ENCODE measurements at regions of chr22 and their contacts with region 1.

Region 1: DNA sequence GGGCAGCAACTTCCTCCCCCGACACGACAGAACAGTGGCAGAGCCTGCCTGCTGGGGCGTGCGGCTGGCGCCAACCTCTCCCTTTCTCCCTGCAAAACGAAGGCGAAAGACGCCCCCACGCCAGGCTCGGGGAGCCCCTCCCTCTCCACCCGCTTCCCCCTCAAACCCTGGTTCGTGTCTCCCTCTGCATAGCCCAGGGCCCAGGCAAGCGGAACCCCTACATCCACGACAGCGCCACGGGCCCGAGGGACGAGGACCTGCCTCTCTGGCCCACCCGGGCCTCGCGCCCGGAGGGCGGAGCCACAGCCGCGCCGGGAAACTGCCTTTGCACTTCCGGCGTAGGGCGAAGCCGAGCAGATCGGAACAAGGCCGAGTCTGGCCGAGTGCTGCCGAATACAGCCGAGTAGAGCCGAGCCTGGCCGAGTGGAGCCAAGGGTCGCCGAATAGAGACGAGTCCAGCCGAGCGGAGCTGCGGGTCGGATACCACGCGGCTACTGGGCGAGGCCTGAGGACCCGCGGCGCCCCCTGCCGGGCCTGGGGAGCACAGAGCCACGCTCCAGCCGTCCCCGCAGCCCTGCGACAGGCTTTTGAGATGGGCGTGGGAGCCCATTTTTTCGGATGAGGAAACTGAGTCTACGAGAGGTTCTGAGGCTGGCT is 11.2 kb upstream of the C1QTNF6 start:
- DNase-seq: peak; percentile 100
- ATAC-seq: peak; percentile 98
- H3K4me3 Mint-ChIP-seq: peak overlapping the region; percentile 89
- H3K27ac Mint-ChIP-seq: peak overlapping the region; percentile 95
- H3K4me1 Mint-ChIP-seq: peaks cover 38% of the 10 kb centered on the region
- H3K27me3 Mint-ChIP-seq: no peaks in the 10 kb centered on the region

Region 2: DNA sequence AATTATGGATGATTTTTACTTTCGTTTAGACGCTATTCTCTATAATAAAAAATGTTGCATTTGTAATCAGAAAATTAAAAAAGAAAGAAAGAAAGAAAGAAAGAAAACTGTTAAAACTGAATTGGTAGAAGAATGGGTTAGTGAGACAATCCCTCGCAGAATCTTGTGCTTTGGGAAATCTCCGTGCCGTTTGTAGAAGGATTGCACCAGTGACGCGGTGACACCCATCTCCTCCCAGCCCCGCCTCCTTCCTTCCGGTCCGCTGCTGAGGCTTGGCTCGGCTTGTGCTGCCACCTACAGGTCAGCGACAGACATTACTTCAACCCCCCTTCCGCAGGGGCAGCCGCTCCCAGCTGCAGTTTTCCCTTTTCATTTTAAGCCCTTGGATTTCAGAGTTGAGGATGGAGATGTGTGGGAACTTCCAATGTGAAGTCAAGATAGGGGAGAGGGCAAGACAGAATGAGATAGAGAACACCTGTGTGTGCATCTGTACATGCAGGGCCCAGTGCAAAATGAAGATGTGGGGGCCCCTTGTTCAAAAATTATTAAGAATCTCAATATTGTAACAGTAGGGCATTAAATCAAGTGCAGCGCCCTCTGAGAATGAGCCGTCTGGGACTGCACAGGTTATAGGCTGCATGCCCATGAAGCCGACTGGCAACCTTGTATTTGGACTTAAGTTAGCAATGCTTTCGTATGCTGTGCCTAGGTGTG is 221.1 kb before region 1 on chr22:
- CTCF ChIA-PET with region 1: interaction called, 5 read pairs
- POLR2A ChIA-PET with region 1: no interaction called
- intact Hi-C with region 1: loop called in 1 of 2 experiments (anchors 2 kb)
- DNase-seq: peak; percentile 95
- ATAC-seq: peak; percentile 86
- H3K4me3 Mint-ChIP-seq: peak overlapping the region; percentile 76
- H3K27ac Mint-ChIP-seq: peak overlapping the region; percentile 77
- H3K4me1 Mint-ChIP-seq: peaks cover 8% of the 10 kb centered on the region
- H3K27me3 Mint-ChIP-seq: no peaks in the 10 kb centered on the region

Region 3: GRCh38 chr22:37043828-37044538 is 155.2 kb before region 1 on chr22:
- CTCF ChIA-PET with region 1: interaction called, 13 read pairs
- POLR2A ChIA-PET with region 1: no interaction called
- intact Hi-C with region 1: loop called in 1 of 2 experiments (anchors 1 kb)
- DNase-seq: peak; percentile 76
- ATAC-seq: peak; percentile 63
- H3K4me3 Mint-ChIP-seq: no peak overlapping the region
- H3K27ac Mint-ChIP-seq: no peak overlapping the region
- H3K4me1 Mint-ChIP-seq: peaks cover 23% of the 10 kb centered on the region
- H3K27me3 Mint-ChIP-seq: no peaks in the 10 kb centered on the region

Region 4: GRCh38 chr22:37121887-37122591 is 77.2 kb before region 1 on chr22:
- CTCF ChIA-PET with region 1: interaction called, 7 read pairs
- POLR2A ChIA-PET with region 1: interaction called, 3 read pairs
- intact Hi-C with region 1: loop called (anchors 1 kb)
- DNase-seq: peak; percentile 96
- ATAC-seq: peak; percentile 94
- H3K4me3 Mint-ChIP-seq: peak overlapping the region; percentile 79
- H3K27ac Mint-ChIP-seq: peak overlapping the region; percentile 98
- H3K4me1 Mint-ChIP-seq: peaks cover 76% of the 10 kb centered on the region
- H3K27me3 Mint-ChIP-seq: no peaks in the 10 kb centered on the region

Region 5: DNA sequence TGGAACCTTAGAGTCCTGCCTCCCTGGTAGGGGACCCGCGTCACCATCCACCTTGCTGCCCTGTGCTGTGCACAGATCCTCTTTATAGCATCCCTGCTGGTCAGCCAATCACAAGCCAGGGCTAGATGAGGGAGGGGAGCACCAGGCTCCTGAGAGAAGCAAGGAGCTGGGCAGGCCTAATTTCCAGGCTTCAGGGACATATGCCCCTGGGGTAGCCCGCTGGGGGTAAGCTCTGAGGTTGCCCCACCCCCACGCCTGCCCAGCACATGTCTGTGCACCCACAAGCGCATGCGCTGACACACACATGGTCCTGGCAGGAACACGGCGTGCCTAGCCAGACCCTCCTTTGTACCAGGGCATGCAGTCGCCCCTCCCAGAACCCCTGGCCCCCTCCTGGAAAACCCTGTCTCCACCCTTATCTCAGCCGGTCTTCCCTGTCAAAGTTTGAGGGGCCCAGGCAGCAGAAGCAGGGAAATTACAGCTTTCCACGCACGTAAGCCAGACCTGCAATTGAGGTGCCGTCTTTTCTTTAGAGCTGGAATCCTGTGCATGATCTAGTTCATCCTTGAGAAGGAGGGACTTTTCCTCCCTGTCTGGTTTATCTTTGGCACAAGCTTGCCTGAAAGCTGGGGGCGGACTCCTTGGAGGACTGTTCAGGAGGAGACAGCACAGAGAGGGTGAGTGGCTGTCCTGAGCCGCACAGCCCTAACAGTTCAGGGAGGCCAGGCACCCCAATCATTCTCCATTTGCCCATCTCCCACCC is 11.0 kb after region 1 on chr22:
- CTCF ChIA-PET with region 1: interaction called, 37 read pairs
- POLR2A ChIA-PET with region 1: no interaction called
- intact Hi-C with region 1: no loop called
- DNase-seq: peak; percentile 16
- ATAC-seq: no peak
- H3K4me3 Mint-ChIP-seq: no peak overlapping the region
- H3K27ac Mint-ChIP-seq: no peak overlapping the region
- H3K4me1 Mint-ChIP-seq: peaks cover 41% of the 10 kb centered on the region
- H3K27me3 Mint-ChIP-seq: no peaks in the 10 kb centered on the region

Region 6: DNA sequence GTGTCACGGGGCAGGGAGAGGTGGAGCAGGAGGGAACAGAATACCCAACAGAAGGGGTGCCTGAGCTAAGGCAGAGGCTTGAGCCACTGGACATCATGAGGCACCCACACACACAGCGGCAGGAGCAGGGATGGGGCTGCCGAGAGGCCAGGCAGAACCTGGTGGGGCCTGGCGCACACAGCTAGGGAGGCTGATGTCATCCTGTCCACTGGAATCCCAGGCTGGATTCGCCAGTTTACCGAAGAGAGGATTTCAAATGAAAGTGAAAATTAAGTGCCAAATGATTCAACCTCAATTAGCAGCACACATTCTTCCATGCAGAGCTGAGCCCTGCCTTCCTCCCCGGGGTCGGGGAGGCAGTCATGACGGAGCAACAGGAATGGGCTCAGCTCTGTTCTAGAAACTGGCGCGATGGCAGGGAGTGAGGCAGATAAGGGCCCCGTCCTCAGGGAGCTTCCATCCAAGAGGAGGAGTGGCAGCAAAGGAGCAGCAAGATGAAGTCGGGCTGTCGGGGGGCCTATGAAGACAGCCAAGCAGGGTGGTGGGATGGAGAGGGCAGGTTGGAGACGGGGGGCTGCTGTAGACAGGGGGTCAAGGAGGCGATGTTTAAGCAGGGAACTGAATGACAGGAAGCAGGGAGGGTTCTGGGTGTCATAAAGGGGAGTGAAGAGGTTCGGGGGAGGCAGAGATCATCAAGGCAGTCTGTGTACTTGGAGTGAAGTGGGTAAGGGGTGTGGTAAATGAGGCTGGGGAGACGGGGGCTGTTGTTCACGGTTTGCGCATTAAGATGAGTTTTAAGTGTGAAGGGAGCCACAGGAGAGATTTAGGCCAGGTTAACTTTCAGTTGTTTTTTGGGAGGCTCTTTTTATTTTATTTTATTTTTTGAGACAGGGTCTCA is 38.4 kb after region 1 on chr22:
- CTCF ChIA-PET with region 1: interaction called, 6 read pairs
- POLR2A ChIA-PET with region 1: interaction called, 4 read pairs
- intact Hi-C with region 1: loop called (anchors 1 to 2 kb)
- DNase-seq: peak; percentile 34
- ATAC-seq: no peak
- H3K4me3 Mint-ChIP-seq: peak overlapping the region; percentile 92
- H3K27ac Mint-ChIP-seq: peak overlapping the region; percentile 94
- H3K4me1 Mint-ChIP-seq: peaks cover 88% of the 10 kb centered on the region
- H3K27me3 Mint-ChIP-seq: no peaks in the 10 kb centered on the region

Measured in activated CD4-positive, alpha-beta T cell treated with anti-CD3 and anti-CD28 coated beads for 36 hours (primary cell).